ENCODE measurements at regions of chr11 and their contacts with region 1.

Region 1: GRCh38 chr11:60959431-60959830 is 7.5 kb upstream of the SLC15A3 start:
- DNase-seq: no peak
- H3K4me3 Mint-ChIP-seq: no peak overlapping the region
- H3K27ac Mint-ChIP-seq: no peak overlapping the region
- H3K4me1 Mint-ChIP-seq: peaks cover 4% of the 10 kb centered on the region
- H3K27me3 Mint-ChIP-seq: peaks cover 19% of the 10 kb centered on the region

Region 2: DNA sequence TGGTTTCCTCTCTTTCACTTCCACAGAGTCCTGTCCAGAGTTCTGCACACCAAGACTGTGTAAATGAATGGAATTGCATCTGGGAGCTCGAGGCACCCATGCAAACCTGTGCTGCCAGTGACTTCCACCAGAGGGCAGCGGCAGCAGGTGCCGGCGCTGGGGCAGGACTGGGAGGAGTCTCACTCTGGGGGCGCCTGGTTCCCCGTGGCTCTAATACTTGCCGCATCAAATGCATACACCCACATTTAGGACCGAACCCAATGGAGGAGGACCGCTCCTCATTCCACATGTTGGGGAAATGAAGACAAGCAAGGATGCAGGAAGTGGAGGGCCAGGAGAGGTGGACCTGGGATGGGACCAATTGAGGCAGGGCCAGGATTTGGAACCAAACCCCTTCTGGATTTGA is 10.9 kb after region 1 on chr11:
- CTCF ChIA-PET with region 1: interaction called, 12 read pairs
- POLR2A ChIA-PET with region 1: no interaction called
- DNase-seq: peak; percentile 85
- H3K4me3 Mint-ChIP-seq: peak overlapping the region; percentile 46
- H3K27ac Mint-ChIP-seq: peak overlapping the region; percentile 61
- H3K4me1 Mint-ChIP-seq: peaks cover 24% of the 10 kb centered on the region
- H3K27me3 Mint-ChIP-seq: peaks cover 5% of the 10 kb centered on the region

Region 3: GRCh38 chr11:61120706-61121191 is 161.3 kb after region 1 on chr11:
- CTCF ChIA-PET with region 1: no interaction called
- POLR2A ChIA-PET with region 1: no interaction called
- DNase-seq: peak; percentile 78
- H3K4me3 Mint-ChIP-seq: peak overlapping the region; percentile 36
- H3K27ac Mint-ChIP-seq: peak overlapping the region; percentile 87
- H3K4me1 Mint-ChIP-seq: peaks cover 64% of the 10 kb centered on the region
- H3K27me3 Mint-ChIP-seq: no peaks in the 10 kb centered on the region

Measured in activated CD4-positive, alpha-beta T cell treated with anti-CD3 and anti-CD28 coated beads, Interleukin-2, amount 10 ng/mL, durations not matched to agents 7 days and 5 days (primary cell).